PC-9 (cell line): ENCODE measurements at regions of chr2 and their contacts with region 1.

Region 1: DNA sequence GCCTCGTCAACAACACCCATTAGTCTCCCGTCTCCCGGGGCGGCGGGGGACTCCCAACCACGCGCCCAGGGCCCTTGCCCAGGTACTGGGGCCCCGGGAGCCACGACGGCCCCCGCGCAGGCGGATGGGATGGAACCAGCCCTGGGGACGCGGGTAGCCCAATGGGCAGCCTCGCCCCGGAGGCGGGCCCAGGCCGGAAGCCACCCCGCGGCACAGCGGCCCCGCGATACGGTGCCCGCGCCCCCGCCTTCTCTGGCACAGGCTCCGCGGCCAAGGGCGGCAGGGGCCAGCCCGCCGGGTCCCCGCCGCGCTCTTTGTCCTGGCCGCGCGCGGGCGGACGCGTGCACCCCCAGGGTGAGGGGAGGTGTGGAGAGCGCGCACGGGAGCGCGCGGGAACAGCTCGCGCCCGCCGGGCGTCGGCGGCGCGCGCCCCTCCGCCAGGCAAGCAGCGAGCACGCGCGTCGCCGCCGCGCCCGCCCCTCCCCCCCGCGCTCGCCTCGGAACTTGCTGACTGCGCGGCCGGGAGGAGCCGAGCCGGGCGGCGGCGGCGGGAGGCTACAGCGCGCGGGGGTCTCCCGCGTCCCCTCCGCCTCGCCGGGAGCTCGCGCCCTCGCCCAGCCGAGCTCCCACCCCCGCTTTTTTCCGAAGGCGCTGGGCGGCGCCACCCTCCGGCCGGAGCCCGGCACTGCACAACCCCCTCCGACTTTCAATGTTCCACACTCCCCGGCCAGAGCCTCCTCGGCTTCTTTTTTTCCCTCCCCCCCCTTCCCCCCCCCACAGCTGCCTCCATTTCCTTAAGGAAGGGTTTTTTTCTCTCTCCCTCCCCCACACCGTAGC is at the start of gene UBE2E3:
- DNase-seq: peak; percentile 70 to 94
- H3K4me3 ChIP-seq: peak within 1 kb of the TSS; percentile 76
- H3K27ac ChIP-seq: peak within 1 kb of the TSS; percentile 86
- H3K4me1 ChIP-seq: peaks cover 46% of the 10 kb centered on the region
- H3K27me3 ChIP-seq: no peaks in the 10 kb centered on the region
- CTCF ChIP-seq: peak; percentile 84
- total RNA-seq, gene UBE2E3: 139 and 180 TPM in 2 replicates

Region 2: GRCh38 chr2:180240774-180241173 is 739.5 kb before region 1 on chr2:
- CTCF ChIA-PET with region 1: no interaction called
- POLR2A ChIA-PET with region 1: no interaction called
- intact Hi-C with region 1: loop called (anchors 1 kb)
- DNase-seq: peak in 1 of 2 experiments; percentile 52
- H3K4me3 ChIP-seq: no peak overlapping the region
- H3K27ac ChIP-seq: no peak overlapping the region
- H3K4me1 ChIP-seq: no peaks in the 10 kb centered on the region
- H3K27me3 ChIP-seq: no peaks in the 10 kb centered on the region
- CTCF ChIP-seq: peak; percentile 59

Region 3: GRCh38 chr2:180520206-180520605 is 460.1 kb before region 1 on chr2:
- CTCF ChIA-PET with region 1: interaction called, 3 read pairs
- POLR2A ChIA-PET with region 1: no interaction called
- intact Hi-C with region 1: loop called (anchors 1 kb)
- DNase-seq: peak in 1 of 2 experiments; percentile 27
- H3K4me3 ChIP-seq: no peak overlapping the region
- H3K27ac ChIP-seq: no peak overlapping the region
- H3K4me1 ChIP-seq: peaks cover 55% of the 10 kb centered on the region
- H3K27me3 ChIP-seq: no peaks in the 10 kb centered on the region
- CTCF ChIP-seq: peak; percentile 48

Region 4: DNA sequence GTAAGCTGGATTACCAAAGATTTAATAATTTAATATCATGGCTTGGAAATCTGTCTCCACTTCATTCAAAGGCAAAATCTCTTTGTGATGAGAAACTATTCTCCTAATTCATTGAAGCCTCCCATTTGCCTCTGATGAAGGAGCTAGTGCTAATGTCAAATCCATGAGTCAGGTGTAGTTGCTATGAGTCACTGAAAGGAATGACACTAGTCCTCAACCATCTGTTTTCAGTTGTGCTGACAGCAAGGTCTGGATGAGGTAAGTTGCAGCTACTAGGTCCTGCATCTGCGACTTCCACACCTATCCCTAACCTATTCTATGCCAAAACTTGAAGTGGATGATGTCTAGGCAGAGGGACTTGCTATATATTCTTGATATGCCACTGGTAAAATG is 323.9 kb before region 1 on chr2:
- CTCF ChIA-PET with region 1: interaction called, 3 read pairs
- POLR2A ChIA-PET with region 1: no interaction called
- intact Hi-C with region 1: loop called (anchors 5 kb)
- DNase-seq: peak; percentile 42 to 93
- H3K4me3 ChIP-seq: no peak overlapping the region
- H3K27ac ChIP-seq: peak overlapping the region; percentile 33
- H3K4me1 ChIP-seq: peaks cover 21% of the 10 kb centered on the region
- H3K27me3 ChIP-seq: no peaks in the 10 kb centered on the region
- CTCF ChIP-seq: no peak

Region 5: GRCh38 chr2:180890781-180891180 is 89.5 kb before region 1 on chr2:
- CTCF ChIA-PET with region 1: no interaction called
- POLR2A ChIA-PET with region 1: no interaction called
- intact Hi-C with region 1: loop called (anchors 5 kb)
- DNase-seq: no peak
- H3K4me3 ChIP-seq: no peak overlapping the region
- H3K27ac ChIP-seq: no peak overlapping the region
- H3K4me1 ChIP-seq: no peaks in the 10 kb centered on the region
- H3K27me3 ChIP-seq: no peaks in the 10 kb centered on the region
- CTCF ChIP-seq: no peak